ENCODE measurements at regions of chrX and their contacts with region 1.

Region 1: GRCh38 chrX:130190801-130191200 is 19.0 kb downstream of the RAB33A start:
- DNase-seq: no peak
- H3K4me3 ChIP-seq: no peak overlapping the region
- H3K27ac ChIP-seq: no peak overlapping the region
- H3K4me1 ChIP-seq: no peaks in the 10 kb centered on the region
- H3K27me3 ChIP-seq: no peaks in the 10 kb centered on the region
- CTCF ChIP-seq: no peak

Region 2: GRCh38 chrX:129925305-129926092 is 265.3 kb before region 1 on chrX:
- CTCF ChIA-PET with region 1: no interaction called
- dilution Hi-C with region 1: no loop called
- in situ Hi-C with region 1: no loop called
- intact Hi-C with region 1: loop called (anchors 5 kb)
- DNase-seq: peak; percentile 50
- H3K4me3 ChIP-seq: no peak overlapping the region
- H3K27ac ChIP-seq: no peak overlapping the region
- H3K4me1 ChIP-seq: peaks cover 3% of the 10 kb centered on the region
- H3K27me3 ChIP-seq: no peaks in the 10 kb centered on the region
- CTCF ChIP-seq: peak; percentile 53 to 55

Region 3: GRCh38 chrX:130049821-130050220 is 141.0 kb before region 1 on chrX:
- CTCF ChIA-PET with region 1: no interaction called
- dilution Hi-C with region 1: no loop called
- in situ Hi-C with region 1: no loop called
- intact Hi-C with region 1: no loop called
- DNase-seq: no peak
- H3K4me3 ChIP-seq: no peak overlapping the region
- H3K27ac ChIP-seq: no peak overlapping the region
- H3K4me1 ChIP-seq: no peaks in the 10 kb centered on the region
- H3K27me3 ChIP-seq: no peaks in the 10 kb centered on the region
- CTCF ChIP-seq: no peak

Region 4: DNA sequence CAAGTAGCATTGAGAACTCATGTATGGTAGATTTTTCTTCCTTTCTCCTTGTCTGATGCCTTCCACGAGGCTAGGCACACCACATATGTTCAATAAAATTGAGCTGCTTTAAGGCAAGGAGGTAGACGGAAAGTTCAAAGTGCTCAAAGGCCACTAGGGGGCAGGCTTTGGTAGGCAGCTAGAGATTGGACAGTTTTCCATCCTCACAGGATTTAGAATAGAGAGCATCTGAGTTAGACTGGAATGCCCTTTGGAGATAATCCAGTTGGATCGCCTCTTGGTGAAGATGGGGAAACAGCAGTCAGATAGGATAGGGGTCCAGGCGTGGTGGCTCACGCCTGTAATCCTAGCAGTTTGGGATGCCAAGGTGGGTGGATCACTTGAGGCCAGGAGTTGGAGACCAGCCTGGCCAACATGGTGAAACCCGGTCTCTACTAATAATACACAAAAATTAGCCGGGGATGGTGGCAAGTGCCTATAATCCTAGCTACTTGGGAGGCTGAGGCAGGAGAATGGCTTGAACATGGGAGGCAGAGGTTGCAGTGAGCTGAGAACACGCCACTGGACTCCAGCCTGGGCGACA is 110.9 kb before region 1 on chrX:
- CTCF ChIA-PET with region 1: interaction called, 3 read pairs
- dilution Hi-C with region 1: no loop called
- in situ Hi-C with region 1: loop called in 1 of 2 experiments (anchors 5 kb)
- intact Hi-C with region 1: loop called (anchors 1 kb)
- DNase-seq: peak; percentile 36
- H3K4me3 ChIP-seq: no peak overlapping the region
- H3K27ac ChIP-seq: no peak overlapping the region
- H3K4me1 ChIP-seq: no peaks in the 10 kb centered on the region
- H3K27me3 ChIP-seq: no peaks in the 10 kb centered on the region
- CTCF ChIP-seq: peak; percentile 65 to 72